Right lobe of liver (tissue), 6 donors: ENCODE measurements at regions of chr17 and their contacts with region 1.

Region 1: GRCh38 chr17:79393358-79394202 is 217.3 kb downstream of the RBFOX3 start:
- DNase-seq: peak; percentile 77 to 78 (median 77)
- ATAC-seq: peak; percentile 82 to 90 (median 86)
- H3K4me3 ChIP-seq: no peak overlapping the region
- H3K27ac ChIP-seq: no peak overlapping the region
- H3K4me1 ChIP-seq: no peaks in the 10 kb centered on the region
- H3K27me3 ChIP-seq: peaks cover 0 to 5% of the 10 kb centered on the region in 2 donors
- CTCF ChIP-seq: peak; percentile 85 to 94 (median 86)
- POLR2A ChIP-seq: no peak

Region 2: GRCh38 chr17:79087428-79088143 is 306.0 kb before region 1 on chr17:
- intact Hi-C with region 1: loop called (anchors 2 to 5 kb)
- DNase-seq: peak in 2 of 3 donors; percentile 70 to 72
- ATAC-seq: peak; percentile 63 to 80 (median 76)
- H3K4me3 ChIP-seq: no peak overlapping the region
- H3K27ac ChIP-seq: no peak overlapping the region
- H3K4me1 ChIP-seq: no peaks in the 10 kb centered on the region
- H3K27me3 ChIP-seq: no peaks in the 10 kb centered on the region
- CTCF ChIP-seq: peak; percentile 72 to 93 (median 92)
- POLR2A ChIP-seq: no peak

Region 3: DNA sequence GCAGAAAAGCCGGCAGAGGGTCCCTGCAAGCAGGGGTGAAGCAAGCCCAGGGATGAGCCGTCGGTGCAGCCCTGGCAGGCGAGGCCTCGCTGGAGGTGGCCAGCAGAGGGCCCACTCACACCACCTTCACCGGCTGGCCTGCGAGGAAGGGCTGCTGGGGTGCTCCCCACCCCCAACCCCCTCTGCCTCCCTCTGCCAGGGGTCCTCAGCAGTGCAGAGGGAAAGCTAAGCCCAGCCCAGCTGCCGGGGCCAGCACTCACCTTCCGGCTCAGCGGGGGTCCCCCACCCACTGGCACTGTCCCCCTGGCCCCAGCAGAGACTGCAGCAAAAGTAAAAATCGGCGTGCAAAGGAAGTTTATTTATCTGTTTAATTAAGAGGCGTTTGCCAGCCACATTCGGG is 205.5 kb before region 1 on chr17:
- intact Hi-C with region 1: loop called (anchors 5 kb)
- DNase-seq: peak in 1 of 3 donors; percentile 52
- ATAC-seq: peak; percentile 45 to 76 (median 67)
- H3K4me3 ChIP-seq: no peak overlapping the region
- H3K27ac ChIP-seq: no peak overlapping the region
- H3K4me1 ChIP-seq: no peaks in the 10 kb centered on the region
- H3K27me3 ChIP-seq: no peaks in the 10 kb centered on the region
- CTCF ChIP-seq: peak; percentile 49 to 78 (median 56)
- POLR2A ChIP-seq: no peak